Endothelial cell of umbilical vein (primary cell): ENCODE measurements at regions of chr1 and their contacts with region 1.

Region 1: GRCh38 chr1:93722081-93723031 is 40.7 kb upstream of the BCAR3 start:
- DNase-seq: peak; percentile 89
- H3K4me3 ChIP-seq: no peak overlapping the region
- H3K27ac ChIP-seq: peak overlapping the region; percentile 74
- H3K4me1 ChIP-seq: peaks cover 23% of the 10 kb centered on the region
- H3K27me3 ChIP-seq: no peaks in the 10 kb centered on the region
- CTCF ChIP-seq: peak; percentile 21 to 36
- POLR2A ChIP-seq: no peak

Region 2: DNA sequence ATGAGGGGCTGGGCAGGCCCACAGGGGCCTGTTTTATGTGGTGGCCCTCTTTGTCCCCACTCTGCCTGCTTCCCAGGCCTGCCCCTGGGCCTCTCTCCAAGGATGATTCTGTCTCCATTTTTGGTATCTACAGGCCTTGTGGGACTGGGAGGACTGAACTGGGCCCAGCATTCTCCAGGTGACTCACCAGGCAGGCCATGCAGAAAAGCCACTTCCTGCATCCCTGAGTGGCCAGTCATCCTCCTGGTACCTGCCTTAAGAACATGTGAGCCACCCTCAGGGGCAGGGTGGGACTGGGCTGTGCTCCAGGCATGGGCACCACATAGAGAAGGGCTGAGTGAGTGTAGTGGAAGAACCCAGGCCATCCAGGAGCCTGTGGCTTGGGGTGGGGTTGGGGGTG is 20.7 kb before region 1 on chr1:
- CTCF ChIA-PET with region 1: no interaction called
- POLR2A ChIA-PET with region 1: no interaction called
- dilution Hi-C with region 1: no loop called
- intact Hi-C with region 1: loop called (anchors 2 kb)
- DNase-seq: peak; percentile 55
- H3K4me3 ChIP-seq: no peak overlapping the region
- H3K27ac ChIP-seq: peak overlapping the region; percentile 25
- H3K4me1 ChIP-seq: peaks cover 9% of the 10 kb centered on the region
- H3K27me3 ChIP-seq: no peaks in the 10 kb centered on the region
- CTCF ChIP-seq: no peak
- POLR2A ChIP-seq: no peak

Region 3: DNA sequence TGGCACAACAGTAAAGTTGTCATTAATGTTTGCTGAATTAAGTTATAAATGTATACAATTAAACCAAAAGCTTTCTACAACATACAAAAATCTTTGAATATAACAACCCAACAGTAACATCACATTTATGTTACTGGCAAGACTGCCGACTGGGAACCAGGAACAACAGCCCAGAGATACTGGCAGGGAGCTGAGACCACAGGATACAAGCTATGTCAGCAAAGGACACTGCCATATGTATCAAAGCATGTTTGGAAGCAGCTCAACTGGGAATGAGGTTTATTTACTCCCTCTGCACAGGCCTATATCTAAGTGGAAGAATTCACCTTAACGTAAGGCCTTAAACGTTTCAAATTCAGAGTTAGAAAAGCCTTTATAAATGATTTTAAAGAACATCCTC is 464.6 kb after region 1 on chr1:
- CTCF ChIA-PET with region 1: no interaction called
- POLR2A ChIA-PET with region 1: no interaction called
- dilution Hi-C with region 1: no loop called
- intact Hi-C with region 1: no loop called
- DNase-seq: no peak
- H3K4me3 ChIP-seq: no peak overlapping the region
- H3K27ac ChIP-seq: peak overlapping the region; percentile 5
- H3K4me1 ChIP-seq: peaks cover 25% of the 10 kb centered on the region
- H3K27me3 ChIP-seq: no peaks in the 10 kb centered on the region
- CTCF ChIP-seq: no peak
- POLR2A ChIP-seq: no peak